ENCODE measurements at regions of chr2 and their contacts with region 1.

Region 1: DNA sequence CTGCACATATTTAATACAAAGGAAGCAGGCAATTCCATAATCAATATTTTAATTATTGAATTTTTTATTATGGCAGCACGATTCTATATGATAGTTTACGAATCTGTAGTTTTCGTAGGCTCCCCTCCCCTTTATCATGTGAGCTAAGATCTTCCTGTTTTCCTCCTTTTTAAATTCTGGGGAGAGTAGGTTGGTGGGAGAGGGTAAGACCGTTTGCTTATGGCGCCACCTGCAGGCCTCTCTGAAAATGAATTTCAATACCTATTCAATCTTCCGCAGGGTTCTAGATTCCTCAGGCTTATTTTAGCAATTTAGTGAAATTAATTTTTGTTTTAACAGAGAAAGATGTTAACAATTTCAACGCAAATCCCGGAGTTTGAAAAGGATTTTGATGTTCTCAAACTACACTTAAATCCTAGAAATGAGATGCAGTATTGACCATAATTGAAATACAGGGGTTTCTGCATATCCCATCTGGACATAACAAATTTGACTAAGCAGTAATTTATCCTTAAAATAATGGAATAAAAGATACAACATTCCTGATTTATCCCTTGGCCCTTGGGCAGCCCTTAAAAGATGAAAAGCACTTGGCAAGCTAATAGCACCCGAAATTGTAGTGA is 12.8 kb upstream of the GBX2 start:
- DNase-seq: no peak
- H3K4me3 ChIP-seq: no peak overlapping the region
- H3K27ac ChIP-seq: no peak overlapping the region
- H3K4me1 ChIP-seq: peaks cover 7 to 9% of the 10 kb centered on the region in 2 donors
- H3K27me3 ChIP-seq: peaks cover 23% of the 10 kb centered on the region
- CTCF ChIP-seq: peak; percentile 27 to 56 (median 28)

Region 2: GRCh38 chr2:235766278-235766677 is 414.7 kb before region 1 on chr2:
- intact Hi-C with region 1: loop called (anchors 5 kb)
- DNase-seq: peak in 1 of 2 donors; percentile 80
- H3K4me3 ChIP-seq: no peak overlapping the region
- H3K27ac ChIP-seq: no peak overlapping the region
- H3K4me1 ChIP-seq: peaks cover 0 to 2% of the 10 kb centered on the region in 2 donors
- H3K27me3 ChIP-seq: no peaks in the 10 kb centered on the region
- CTCF ChIP-seq: peak; percentile 72 to 84 (median 78)

Region 3: GRCh38 chr2:235789552-235789951 is 391.4 kb before region 1 on chr2:
- intact Hi-C with region 1: loop called (anchors 5 kb)
- DNase-seq: no peak
- H3K4me3 ChIP-seq: no peak overlapping the region
- H3K27ac ChIP-seq: no peak overlapping the region
- H3K4me1 ChIP-seq: no peaks in the 10 kb centered on the region
- H3K27me3 ChIP-seq: no peaks in the 10 kb centered on the region
- CTCF ChIP-seq: no peak